ENCODE measurements at regions of chr1 and their contacts with region 1.

Region 1: GRCh38 chr1:231337472-231338269 is at the start of gene EXOC8:
- DNase-seq: peak; percentile 94
- H3K4me3 ChIP-seq: peak within 1 kb of the TSS; percentile 99
- H3K27ac ChIP-seq: peak within 1 kb of the TSS; percentile 99
- H3K27me3 ChIP-seq: no peaks in the 10 kb centered on the region
- CTCF ChIP-seq: no peak
- polyA plus RNA-seq, gene EXOC8: 4.1 and 5.0 TPM in 2 replicates

Region 2: GRCh38 chr1:231226156-231226555 is 111.5 kb before region 1 on chr1:
- CTCF ChIA-PET with region 1: interaction called, 3 read pairs
- POLR2A ChIA-PET with region 1: interaction called, 12 read pairs
- DNase-seq: no peak
- H3K4me3 ChIP-seq: no peak overlapping the region
- H3K27ac ChIP-seq: no peak overlapping the region
- H3K27me3 ChIP-seq: no peaks in the 10 kb centered on the region
- CTCF ChIP-seq: no peak

Region 3: DNA sequence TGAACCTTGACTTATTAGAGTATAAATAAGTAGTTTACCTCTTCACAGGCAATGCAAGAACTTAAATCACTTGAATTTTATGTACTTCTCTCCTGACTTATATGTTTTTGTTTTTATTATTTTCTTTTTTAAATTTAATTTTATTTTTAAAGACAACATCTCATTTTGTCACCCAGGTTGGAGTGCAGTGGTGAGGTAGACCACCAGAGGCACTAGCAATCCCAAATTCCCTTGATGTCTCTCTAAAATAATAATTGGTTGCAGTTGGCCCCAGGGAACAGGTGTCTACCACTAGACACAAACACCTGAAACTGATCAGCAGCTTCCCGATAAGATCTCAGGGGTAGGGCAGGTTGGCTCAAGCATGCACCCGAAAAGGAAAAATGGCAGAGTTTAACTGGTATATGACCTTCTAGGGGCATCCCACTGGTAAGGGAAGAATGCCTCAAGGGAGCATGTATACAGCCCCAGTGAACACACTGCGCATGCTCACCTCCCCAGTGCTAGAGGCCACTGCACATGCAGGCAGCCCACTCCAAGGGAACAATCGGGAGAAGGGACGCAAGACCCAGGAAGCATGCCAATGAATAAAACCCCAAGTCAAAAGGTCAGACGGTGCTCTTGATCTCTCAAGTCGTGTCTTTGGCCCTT is 14.7 kb before region 1 on chr1:
- CTCF ChIA-PET with region 1: no interaction called
- POLR2A ChIA-PET with region 1: no interaction called
- DNase-seq: no peak
- H3K4me3 ChIP-seq: no peak overlapping the region
- H3K27ac ChIP-seq: no peak overlapping the region
- H3K27me3 ChIP-seq: no peaks in the 10 kb centered on the region
- CTCF ChIP-seq: 0 out of 2 replicates have a peak, but pooled peaks have one; percentile 9

Region 4: DNA sequence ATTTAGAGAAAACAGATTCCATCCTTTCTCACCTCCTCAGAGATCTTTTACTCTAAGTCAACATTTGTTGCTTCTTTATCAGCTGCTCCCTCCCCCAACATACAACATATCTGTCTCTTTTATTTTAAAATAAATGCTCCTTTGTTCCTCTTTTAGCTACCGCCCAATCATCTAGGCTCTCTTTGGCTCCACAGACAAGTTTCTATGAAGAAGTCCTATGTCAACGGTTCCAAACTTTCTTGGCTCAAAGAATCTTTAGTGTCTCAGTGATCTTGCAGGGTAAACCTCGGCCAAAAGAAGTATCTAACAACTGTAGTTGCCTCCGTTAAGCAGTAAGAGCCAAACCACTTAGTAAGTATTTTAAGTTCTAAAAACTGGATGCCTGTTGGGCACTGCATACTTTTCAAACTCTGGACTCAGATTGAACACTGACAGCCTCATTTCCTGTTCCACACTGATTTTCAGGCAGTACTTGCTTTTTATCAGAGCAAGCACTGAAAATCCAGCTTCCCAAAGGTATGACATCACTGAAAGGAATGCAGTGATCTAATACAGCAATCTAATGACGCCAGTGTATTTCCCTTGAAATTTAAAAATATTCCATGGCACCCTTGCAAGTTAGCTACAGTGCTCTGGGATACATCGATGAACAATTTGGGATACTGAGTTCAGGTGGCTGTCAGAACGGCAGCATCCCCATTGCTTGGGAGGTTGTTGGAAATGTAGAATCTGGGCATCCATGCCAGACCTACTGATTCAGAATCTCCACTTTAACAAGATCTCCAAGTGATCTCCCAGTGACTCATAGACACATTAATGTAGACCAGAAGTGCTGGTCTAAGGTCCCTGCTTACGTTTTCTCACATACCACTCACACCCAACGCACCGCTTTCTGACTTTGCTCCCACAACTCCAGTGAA is 57.7 kb after region 1 on chr1:
- CTCF ChIA-PET with region 1: no interaction called
- POLR2A ChIA-PET with region 1: no interaction called
- DNase-seq: peak; percentile 82
- H3K4me3 ChIP-seq: peak overlapping the region; percentile 17; the same call in 1 of the 2 replicates
- H3K27ac ChIP-seq: peak overlapping the region; percentile 91
- H3K27me3 ChIP-seq: no peaks in the 10 kb centered on the region
- CTCF ChIP-seq: no peak

Region 5: DNA sequence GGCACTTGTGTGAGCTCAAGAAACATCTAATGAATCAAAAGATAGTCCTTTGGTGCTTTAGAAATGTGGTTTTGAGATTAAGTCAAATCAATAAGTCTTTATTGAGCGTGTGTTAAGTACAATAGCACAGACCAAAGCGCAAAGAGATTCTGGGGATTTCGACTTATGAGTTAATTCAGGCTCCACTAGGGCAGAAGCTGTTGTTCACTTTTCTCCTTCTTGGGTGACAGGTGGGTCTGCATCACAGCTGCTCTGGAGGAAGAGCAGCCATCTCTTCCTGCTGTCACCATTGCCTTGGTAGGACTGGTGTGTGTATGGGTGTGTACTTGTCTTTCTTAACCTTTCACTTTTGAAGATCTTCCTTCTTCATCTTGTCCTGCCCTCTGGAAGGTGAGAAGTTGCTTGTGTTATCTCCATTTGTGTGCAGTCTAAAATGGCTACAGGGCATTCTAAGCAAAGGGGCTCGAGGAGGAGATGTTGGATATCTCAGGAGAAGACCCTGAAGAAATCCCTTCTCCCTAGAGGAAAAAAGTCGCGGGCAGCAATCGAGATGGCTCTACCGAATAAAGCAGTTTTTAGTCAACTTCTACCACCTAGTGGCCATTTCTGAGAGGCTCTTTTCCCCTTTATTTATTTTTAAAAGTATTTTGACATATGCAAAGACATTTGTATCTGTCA is 266.1 kb after region 1 on chr1:
- CTCF ChIA-PET with region 1: interaction called, 12 read pairs
- POLR2A ChIA-PET with region 1: interaction called, 5 read pairs
- DNase-seq: no peak
- H3K4me3 ChIP-seq: peak overlapping the region; percentile 53
- H3K27ac ChIP-seq: no peak overlapping the region
- H3K27me3 ChIP-seq: no peaks in the 10 kb centered on the region
- CTCF ChIP-seq: peak; percentile 72

Measured in AG04450 (cell line).